ENCODE measurements at regions of chr1 and their contacts with region 1.

Region 1: DNA sequence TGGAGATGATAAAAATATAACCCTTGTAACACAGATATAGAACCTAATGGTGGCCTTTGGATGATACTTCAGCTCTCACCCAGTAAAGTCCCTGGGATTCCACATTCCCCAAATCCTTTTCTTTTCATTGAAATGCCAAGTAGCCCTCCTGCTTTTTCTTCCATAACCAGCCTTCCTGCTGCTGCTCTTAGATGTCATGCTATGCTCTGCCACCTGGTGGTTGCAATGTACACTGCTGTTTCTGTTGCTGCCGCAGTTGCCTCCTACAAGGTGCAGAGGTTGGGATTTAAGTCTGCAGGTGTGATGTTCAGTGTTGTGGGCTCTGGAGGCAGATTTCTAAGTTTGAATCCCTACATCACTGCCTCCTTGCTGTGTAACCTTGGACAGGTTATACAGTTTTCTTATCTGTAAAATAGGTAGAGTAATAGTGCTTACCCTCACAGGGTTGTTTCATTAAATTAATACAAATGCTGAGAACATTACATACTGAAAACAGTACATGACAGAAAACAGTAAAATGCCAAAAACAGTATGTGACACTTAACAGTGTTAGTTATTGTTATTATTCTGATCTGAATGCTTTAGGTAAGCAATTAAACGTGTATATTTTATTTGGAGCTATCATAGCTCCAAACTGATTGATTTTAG is 64.3 kb downstream of the CAMSAP2 start:
- DNase-seq: peak; percentile 83
- H3K4me3 ChIP-seq: no peak overlapping the region
- H3K27ac ChIP-seq: no peak overlapping the region
- H3K4me1 ChIP-seq: peaks cover 0 to 7% (median 0%) of the 10 kb centered on the region in 4 donors
- H3K27me3 ChIP-seq: no peaks in the 10 kb centered on the region
- CTCF ChIP-seq: peak; percentile 87 to 91 (median 90)
- EP300 ChIP-seq: no peak
- POLR2A ChIP-seq: no peak

Region 2: GRCh38 chr1:200620273-200621131 is 182.5 kb before region 1 on chr1 and contains the start of gene KIF14:
- in situ Hi-C with region 1: loop called in 3 of 4 experiments (anchors 5 kb)
- intact Hi-C with region 1: no loop called
- DNase-seq: peak; percentile 95
- H3K4me3 ChIP-seq: peak within 1 kb of the TSS; percentile 46 to 68 (median 56)
- H3K27ac ChIP-seq: peak within 1 kb of the TSS; percentile 45 to 74 (median 68)
- H3K4me1 ChIP-seq: peaks cover 0 to 22% (median 16%) of the 10 kb centered on the region in 4 donors
- H3K27me3 ChIP-seq: no peaks in the 10 kb centered on the region
- CTCF ChIP-seq: no peak
- EP300 ChIP-seq: no peak
- POLR2A ChIP-seq: no peak
- total RNA-seq, gene KIF14: 0.40 to 0.68 (median 0.64) TPM in 3 of 4 donors, not detected in the other

Region 3: GRCh38 chr1:200639790-200640669 is 163.0 kb before region 1 on chr1:
- in situ Hi-C with region 1: loop called in 1 of 4 experiments (anchors 10 kb)
- intact Hi-C with region 1: no loop called
- DNase-seq: peak; percentile 53
- H3K4me3 ChIP-seq: no peak overlapping the region
- H3K27ac ChIP-seq: peak overlapping the region in 1 of 4 donors; percentile 10
- H3K4me1 ChIP-seq: no peaks in the 10 kb centered on the region
- H3K27me3 ChIP-seq: no peaks in the 10 kb centered on the region
- CTCF ChIP-seq: no peak
- EP300 ChIP-seq: no peak
- POLR2A ChIP-seq: no peak

Region 4: GRCh38 chr1:200669314-200670241 is 133.4 kb before region 1 on chr1 and contains the start of gene DDX59:
- in situ Hi-C with region 1: no loop called
- intact Hi-C with region 1: loop called (anchors 10 kb)
- DNase-seq: peak; percentile 96
- H3K4me3 ChIP-seq: peak within 1 kb of the TSS; percentile 69 to 96 (median 85)
- H3K27ac ChIP-seq: peak within 1 kb of the TSS; percentile 98 to 100 (median 100)
- H3K4me1 ChIP-seq: peaks cover 10 to 34% (median 12%) of the 10 kb centered on the region in 4 donors
- H3K27me3 ChIP-seq: no peaks in the 10 kb centered on the region
- CTCF ChIP-seq: no peak
- EP300 ChIP-seq: peak; percentile 93
- POLR2A ChIP-seq: peak; percentile 96
- total RNA-seq, gene DDX59: 8.6 to 17.5 (median 14.6) TPM

Region 5: DNA sequence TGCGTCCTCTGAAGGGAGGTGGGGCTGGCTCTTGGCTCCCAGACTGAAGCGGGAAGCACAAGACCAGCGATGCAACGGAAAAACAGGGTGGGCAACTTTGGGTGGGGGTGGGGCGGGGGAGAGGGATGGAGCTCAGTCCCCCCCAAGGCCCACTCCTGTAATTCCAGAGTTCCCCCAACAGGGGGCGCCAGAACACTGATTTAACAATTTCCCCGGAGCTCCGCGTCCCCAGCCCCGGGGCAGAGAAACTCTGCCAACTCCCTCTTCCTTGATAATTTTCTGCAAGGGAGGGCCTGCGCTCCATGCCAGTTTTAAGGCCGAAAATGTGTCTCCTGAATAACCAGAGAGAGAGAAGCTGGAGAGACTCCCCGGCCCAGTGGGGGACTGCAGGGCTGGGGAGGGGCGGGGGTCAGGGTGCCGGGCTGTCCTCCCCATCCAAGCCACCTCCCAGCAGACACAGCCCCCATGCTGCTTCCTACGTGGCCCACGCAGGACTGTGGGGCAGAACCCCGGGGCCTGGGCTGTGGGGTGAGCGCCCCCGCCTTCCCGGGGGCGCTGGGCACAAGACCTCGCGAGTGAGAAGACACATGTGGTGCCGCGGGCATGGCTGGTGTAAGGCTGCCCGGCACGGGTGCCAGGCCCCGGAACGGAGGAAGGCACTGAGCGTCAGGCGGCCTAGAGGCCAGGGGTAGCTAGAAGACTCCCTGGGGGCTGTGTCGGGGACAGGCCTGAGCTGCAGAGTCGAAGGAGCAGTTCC is 169.1 kb after region 1 on chr1:
- in situ Hi-C with region 1: no loop called
- intact Hi-C with region 1: no loop called
- DNase-seq: peak; percentile 66
- H3K4me3 ChIP-seq: no peak overlapping the region
- H3K27ac ChIP-seq: no peak overlapping the region
- H3K4me1 ChIP-seq: peaks cover 3 to 22% (median 13%) of the 10 kb centered on the region in 4 donors
- H3K27me3 ChIP-seq: no peaks in the 10 kb centered on the region
- CTCF ChIP-seq: peak; percentile 79 to 98 (median 96)
- EP300 ChIP-seq: no peak
- POLR2A ChIP-seq: no peak

Region 6: DNA sequence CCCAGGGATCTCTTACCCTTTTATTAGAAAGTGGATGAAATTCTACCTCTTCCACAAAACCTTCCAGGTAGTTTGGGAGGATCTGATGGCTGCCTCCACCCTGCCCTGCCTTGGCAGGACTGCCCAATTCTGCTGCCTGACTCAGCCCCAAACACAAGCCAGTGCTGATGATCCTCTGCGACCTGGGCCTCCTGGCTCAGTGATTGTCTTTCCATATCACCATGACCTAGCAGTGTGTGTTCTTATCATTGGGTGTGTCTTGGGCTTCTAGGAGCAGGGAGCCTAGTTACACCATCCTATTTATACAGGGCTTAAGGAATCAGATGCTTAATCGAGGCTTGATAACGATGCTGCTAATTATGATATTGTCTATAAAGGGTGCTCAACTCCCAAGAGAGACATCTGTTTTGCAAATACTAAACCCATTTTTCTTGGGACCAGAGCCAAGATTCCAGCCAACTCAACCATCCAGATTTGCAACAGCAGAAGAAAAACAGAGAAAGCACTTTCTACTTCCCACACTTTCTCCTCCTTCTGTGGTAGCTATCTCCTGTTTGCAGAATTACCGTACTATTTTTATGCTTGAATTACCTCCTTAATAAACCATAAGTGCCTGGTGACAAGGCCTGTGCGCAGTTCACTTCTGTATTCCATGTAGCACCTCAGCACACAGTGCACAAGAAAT is 257.0 kb after region 1 on chr1:
- in situ Hi-C with region 1: no loop called
- intact Hi-C with region 1: no loop called
- DNase-seq: no peak
- H3K4me3 ChIP-seq: no peak overlapping the region
- H3K27ac ChIP-seq: no peak overlapping the region
- H3K4me1 ChIP-seq: peaks cover 2 to 15% (median 9%) of the 10 kb centered on the region in 4 donors
- H3K27me3 ChIP-seq: no peaks in the 10 kb centered on the region
- CTCF ChIP-seq: no peak
- EP300 ChIP-seq: no peak
- POLR2A ChIP-seq: no peak